ENCODE measurements at regions of chr1 and their contacts with region 1.

Region 1: DNA sequence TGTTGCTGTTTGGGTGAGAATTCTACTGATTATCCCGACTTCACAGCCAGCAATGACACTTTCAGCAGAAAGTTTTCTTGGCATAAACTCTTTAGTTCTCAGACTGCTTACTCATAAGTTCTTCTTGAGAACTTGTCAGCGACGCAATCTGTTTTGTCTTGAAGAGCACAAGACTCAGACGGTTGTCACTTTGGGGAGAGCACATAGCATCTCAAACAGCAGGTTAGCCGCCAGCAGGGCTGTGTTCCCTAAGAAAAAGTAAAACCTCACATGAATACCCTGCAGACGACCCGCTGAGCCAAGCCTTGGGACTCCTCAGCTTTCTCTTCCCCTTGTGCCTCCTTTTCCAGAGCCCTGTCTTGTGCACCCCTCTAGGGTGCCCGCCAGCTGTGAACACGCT is 11.4 kb downstream of the AGMAT start:
- DNase-seq: no peak
- ATAC-seq: no peak
- H3K4me3 Mint-ChIP-seq: peak overlapping the region; percentile 24
- H3K27ac Mint-ChIP-seq: peak overlapping the region; percentile 86
- H3K4me1 Mint-ChIP-seq: peaks cover 43% of the 10 kb centered on the region
- H3K27me3 Mint-ChIP-seq: no peaks in the 10 kb centered on the region
- CTCF ChIP-seq: no peak

Region 2: GRCh38 chr1:15559294-15559761 is 14.1 kb before region 1 on chr1:
- CTCF ChIA-PET with region 1: no interaction called
- POLR2A ChIA-PET with region 1: interaction called, 13 read pairs
- intact Hi-C with region 1: loop called (anchors 1 kb)
- DNase-seq: no peak
- ATAC-seq: no peak
- H3K4me3 Mint-ChIP-seq: no peak overlapping the region
- H3K27ac Mint-ChIP-seq: no peak overlapping the region
- H3K4me1 Mint-ChIP-seq: peaks cover 16% of the 10 kb centered on the region
- H3K27me3 Mint-ChIP-seq: no peaks in the 10 kb centered on the region
- CTCF ChIP-seq: no peak

Region 3: DNA sequence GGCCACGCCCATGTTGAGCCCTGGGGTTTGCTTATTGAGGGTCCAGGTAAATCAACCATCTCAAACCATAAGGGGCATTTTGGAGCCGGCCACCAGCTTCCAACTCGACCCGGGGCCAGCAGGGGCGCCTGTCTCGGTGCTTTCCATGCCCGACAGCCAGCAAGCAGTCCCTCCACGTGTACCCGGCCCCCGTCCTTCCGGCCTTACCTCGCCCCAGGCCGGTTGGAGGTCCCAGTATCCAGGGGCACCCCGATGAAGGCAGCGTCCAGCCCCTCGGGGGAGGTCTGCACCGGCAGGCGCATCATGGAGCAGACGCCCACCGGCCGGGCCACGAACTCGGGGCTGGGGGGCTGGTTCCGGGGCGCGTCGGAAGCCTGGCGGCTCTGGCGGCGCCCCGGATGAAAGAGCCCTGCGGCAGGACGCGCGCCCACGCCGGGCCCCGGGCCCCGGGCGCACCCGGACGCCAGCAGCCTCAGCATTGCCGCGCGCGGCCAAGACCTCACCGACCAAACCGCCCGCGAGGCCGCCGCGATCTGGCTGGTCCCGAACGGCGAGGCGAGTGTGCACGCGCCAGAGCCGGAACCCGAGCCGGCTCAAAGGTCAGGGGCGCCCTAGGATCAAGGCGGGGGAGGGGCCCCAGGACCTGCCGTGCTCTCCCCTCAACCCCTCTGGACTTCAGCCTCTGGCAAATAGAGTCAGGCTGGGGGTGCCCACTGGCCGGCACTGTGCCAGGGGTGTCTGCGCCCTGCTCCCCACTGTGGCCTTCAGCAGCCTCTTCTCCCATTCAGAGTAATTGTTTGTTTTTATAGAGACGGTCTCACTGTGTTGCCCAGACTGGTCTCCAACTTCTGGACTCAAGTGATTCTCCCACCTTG is 11.2 kb after region 1 on chr1 and contains the start of gene AGMAT:
- CTCF ChIA-PET with region 1: interaction called, 4 read pairs
- POLR2A ChIA-PET with region 1: interaction called, 10 read pairs
- intact Hi-C with region 1: loop called (anchors 1 kb)
- DNase-seq: peak; percentile 64
- ATAC-seq: peak; percentile 87
- H3K4me3 Mint-ChIP-seq: peak within 1 kb of the TSS; percentile 82
- H3K27ac Mint-ChIP-seq: peak within 1 kb of the TSS; percentile 81
- H3K4me1 Mint-ChIP-seq: peaks cover 19% of the 10 kb centered on the region
- H3K27me3 Mint-ChIP-seq: no peaks in the 10 kb centered on the region
- CTCF ChIP-seq: no peak
- total RNA-seq, gene AGMAT: 8.1 TPM in 2 replicates

Region 4: GRCh38 chr1:15603050-15603965 is 29.8 kb after region 1 on chr1:
- CTCF ChIA-PET with region 1: interaction called, 3 read pairs
- POLR2A ChIA-PET with region 1: interaction called, 28 read pairs
- intact Hi-C with region 1: loop called (anchors 2 kb)
- DNase-seq: peak; percentile 87
- ATAC-seq: peak; percentile 94
- H3K4me3 Mint-ChIP-seq: peak overlapping the region; percentile 85
- H3K27ac Mint-ChIP-seq: peak overlapping the region; percentile 81
- H3K4me1 Mint-ChIP-seq: peaks cover 14% of the 10 kb centered on the region
- H3K27me3 Mint-ChIP-seq: no peaks in the 10 kb centered on the region
- CTCF ChIP-seq: no peak

Region 5: GRCh38 chr1:15684468-15685291 is 111.2 kb after region 1 on chr1:
- CTCF ChIA-PET with region 1: no interaction called
- POLR2A ChIA-PET with region 1: interaction called, 5 read pairs
- intact Hi-C with region 1: loop called (anchors 2 kb)
- DNase-seq: peak; percentile 46
- ATAC-seq: peak; percentile 6
- H3K4me3 Mint-ChIP-seq: peak overlapping the region; percentile 88
- H3K27ac Mint-ChIP-seq: peak overlapping the region; percentile 81
- H3K4me1 Mint-ChIP-seq: peaks cover 70% of the 10 kb centered on the region
- H3K27me3 Mint-ChIP-seq: no peaks in the 10 kb centered on the region
- CTCF ChIP-seq: no peak

Measured in activated B cell treated with CpG ODN at 0.5 μM for 24 hours (primary cell).